Heart left ventricle (tissue), 16 donors: ENCODE measurements at regions of chr1 and their contacts with region 1.

Region 1: DNA sequence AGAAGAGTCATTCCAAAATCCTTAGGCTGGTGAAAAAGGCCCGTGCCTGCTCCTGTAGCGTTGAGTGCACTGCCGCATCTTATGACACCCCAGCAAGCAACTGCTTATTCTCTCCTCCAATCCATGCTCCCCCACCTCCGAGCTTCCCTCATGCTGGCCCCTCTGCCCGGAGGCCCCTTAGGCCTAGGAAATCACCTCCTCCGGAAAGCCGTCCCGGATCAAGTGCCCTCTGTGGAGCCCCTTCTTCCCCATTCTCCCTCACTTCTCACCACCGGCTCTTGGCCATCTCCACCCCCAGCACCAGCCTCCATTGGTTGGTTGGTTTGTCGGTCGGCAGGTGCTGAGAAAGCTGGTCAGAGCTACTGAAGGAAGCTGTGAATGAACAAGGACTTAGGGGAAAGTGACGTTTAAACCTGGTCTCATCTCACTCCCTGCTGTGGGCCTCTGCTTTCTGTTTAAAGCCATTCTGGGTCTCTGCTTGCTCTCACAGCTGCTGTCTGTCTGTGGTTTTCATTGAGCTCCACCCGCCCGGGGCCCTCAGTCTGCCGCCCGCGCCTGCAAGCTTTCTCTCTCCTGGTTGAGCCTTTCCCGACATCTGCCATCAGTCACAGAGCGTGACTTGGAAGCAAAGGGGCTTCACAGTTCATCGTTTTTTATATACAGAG is 122.2 kb downstream of the KCNN3 start:
- DNase-seq: peak in 4 of 5 donors; percentile 43 to 71 (median 61)
- ATAC-seq: peak; percentile 39 to 53 (median 47)
- H3K4me3 ChIP-seq: no peak overlapping the region
- H3K27ac ChIP-seq: peak overlapping the region in 6 of 12 donors; percentile 5 to 57 (median 30)
- H3K4me1 ChIP-seq: peaks cover 0 to 48% (median 19%) of the 10 kb centered on the region in 12 donors
- H3K27me3 ChIP-seq: no peaks in the 10 kb centered on the region
- CTCF ChIP-seq: no peak
- POLR2A ChIP-seq: no peak

Region 2: DNA sequence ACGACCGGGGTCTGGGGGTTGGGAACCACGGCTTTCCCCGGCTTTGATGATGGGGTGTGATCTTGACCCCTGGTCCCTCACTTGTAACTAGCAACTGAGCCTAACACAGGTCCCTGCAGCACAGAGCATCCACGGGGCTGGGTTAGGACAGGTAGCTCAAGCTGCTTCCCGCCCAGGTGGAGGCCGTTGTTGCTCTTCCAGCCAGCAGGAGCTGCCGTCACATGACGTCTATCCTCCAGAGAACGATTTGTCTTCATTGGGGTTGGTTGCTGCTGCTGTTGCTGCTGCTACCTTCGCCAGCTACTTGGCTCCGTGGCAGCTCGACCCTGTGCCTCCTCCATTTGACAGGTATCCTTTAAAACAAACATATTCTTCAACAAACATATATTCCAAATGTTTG is 65.6 kb before region 1 on chr1:
- intact Hi-C with region 1: loop called in 1 of 10 experiments (anchors 10 kb)
- DNase-seq: no peak
- ATAC-seq: no peak
- H3K4me3 ChIP-seq: no peak overlapping the region
- H3K27ac ChIP-seq: no peak overlapping the region
- H3K4me1 ChIP-seq: no peaks in the 10 kb centered on the region
- H3K27me3 ChIP-seq: no peaks in the 10 kb centered on the region
- CTCF ChIP-seq: no peak
- POLR2A ChIP-seq: no peak

Region 3: DNA sequence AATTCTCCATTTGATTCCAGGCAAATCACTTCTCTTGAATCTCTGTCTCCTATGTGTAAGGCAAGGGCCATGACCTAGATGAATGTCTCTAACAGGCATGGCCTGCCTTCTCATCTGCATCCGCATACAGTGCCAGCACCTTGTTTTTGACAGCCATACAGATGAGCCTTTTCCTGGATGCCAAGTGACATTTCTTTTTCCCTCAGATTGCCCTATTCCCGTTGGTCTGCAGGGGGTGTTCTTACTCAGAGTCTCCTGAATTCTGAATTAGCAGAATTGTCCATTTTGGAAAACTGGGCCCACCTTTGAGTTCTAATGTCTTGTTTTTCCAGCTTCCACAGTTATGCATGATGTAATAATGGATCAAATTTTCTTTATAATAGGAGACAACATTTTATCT is 51.9 kb before region 1 on chr1:
- intact Hi-C with region 1: no loop called
- DNase-seq: no peak
- ATAC-seq: no peak
- H3K4me3 ChIP-seq: no peak overlapping the region
- H3K27ac ChIP-seq: no peak overlapping the region
- H3K4me1 ChIP-seq: peaks cover 0 to 17% (median 0%) of the 10 kb centered on the region in 12 donors
- H3K27me3 ChIP-seq: no peaks in the 10 kb centered on the region
- CTCF ChIP-seq: peak in 4 of 12 donors; percentile 8 to 30 (median 20)
- POLR2A ChIP-seq: no peak

Region 4: GRCh38 chr1:154802982-154803920 is 55.4 kb after region 1 on chr1:
- intact Hi-C with region 1: loop called in 1 of 10 experiments (anchors 5 kb)
- DNase-seq: no peak
- ATAC-seq: peak in 1 of 4 donors; percentile 9
- H3K4me3 ChIP-seq: no peak overlapping the region
- H3K27ac ChIP-seq: no peak overlapping the region
- H3K4me1 ChIP-seq: peaks cover 0 to 25% (median 14%) of the 10 kb centered on the region in 12 donors
- H3K27me3 ChIP-seq: peaks cover 0 to 2% (median 0%) of the 10 kb centered on the region in 9 donors
- CTCF ChIP-seq: no peak
- POLR2A ChIP-seq: no peak